ENCODE measurements at regions of chr2 and their contacts with region 1.

Region 1: GRCh38 chr2:203909261-203909967 is 27.1 kb upstream of the ICOS start:
- DNase-seq: peak; percentile 67
- ATAC-seq: peak; percentile 86
- H3K4me3 ChIP-seq: peak overlapping the region; percentile 44
- H3K27ac ChIP-seq: no peak overlapping the region
- H3K4me1 ChIP-seq: peaks cover 11% of the 10 kb centered on the region; the same call in 1 of the 2 replicates
- H3K27me3 ChIP-seq: peaks cover 6% of the 10 kb centered on the region; the same call in 1 of the 2 replicates
- CTCF ChIP-seq: peak; percentile 90

Region 2: DNA sequence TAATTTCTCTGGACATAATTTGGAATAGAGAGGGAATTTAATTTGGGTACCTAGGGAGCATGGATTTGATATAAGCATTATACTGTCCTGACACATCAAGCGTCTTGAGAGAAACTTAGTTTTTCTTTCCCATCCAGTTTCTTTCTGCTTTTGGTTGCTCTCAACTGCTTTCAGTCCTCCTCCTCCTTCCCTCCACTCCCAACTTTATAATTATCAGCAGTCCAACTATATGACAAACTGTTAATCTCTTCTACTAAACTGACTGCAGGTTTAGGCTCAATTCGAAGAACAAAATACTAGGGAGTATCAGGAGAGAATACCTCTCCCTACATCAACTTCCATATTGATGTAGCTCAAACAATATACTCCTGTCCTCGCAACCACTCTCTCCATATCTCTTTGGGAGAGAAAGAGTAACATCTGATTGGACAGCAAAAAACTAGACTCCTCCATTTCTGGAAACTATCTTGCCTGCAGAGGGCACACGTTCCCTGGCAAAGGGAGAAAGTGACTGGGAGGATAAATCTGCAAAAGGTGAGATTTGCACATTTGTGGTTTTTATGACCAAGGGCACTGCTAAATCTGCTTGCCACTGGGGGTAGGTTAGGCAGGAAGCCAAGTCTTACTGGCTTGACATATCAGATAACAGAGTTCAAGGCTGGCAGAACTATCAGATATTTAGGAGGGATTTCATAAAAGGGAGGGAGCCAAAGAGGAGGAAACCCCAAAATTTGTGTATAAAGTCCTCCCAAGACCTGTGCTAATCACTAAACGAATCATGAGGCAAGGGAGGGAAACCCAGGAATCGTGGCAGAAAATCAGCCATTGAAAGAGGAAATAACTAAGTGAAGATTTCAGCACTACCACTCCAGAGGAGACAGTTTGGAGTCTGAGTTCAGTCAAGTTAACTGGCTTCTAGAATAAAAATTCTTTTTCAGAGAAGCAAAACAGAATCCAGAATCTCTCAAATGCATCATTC is 1077.9 kb before region 1 on chr2:
- CTCF ChIA-PET with region 1: interaction called, 4 read pairs
- POLR2A ChIA-PET with region 1: no interaction called
- intact Hi-C with region 1: loop called (anchors 5 kb)
- DNase-seq: peak; percentile 86
- ATAC-seq: peak; percentile 97
- H3K4me3 ChIP-seq: peak overlapping the region; percentile 38
- H3K27ac ChIP-seq: no peak overlapping the region
- H3K4me1 ChIP-seq: peaks cover 6% of the 10 kb centered on the region
- H3K27me3 ChIP-seq: no peaks in the 10 kb centered on the region
- CTCF ChIP-seq: peak; percentile 95

Region 3: GRCh38 chr2:203484266-203485112 is 424.9 kb before region 1 on chr2:
- CTCF ChIA-PET with region 1: no interaction called
- POLR2A ChIA-PET with region 1: no interaction called
- intact Hi-C with region 1: loop called (anchors 1 kb)
- DNase-seq: peak; percentile 72
- ATAC-seq: peak; percentile 98
- H3K4me3 ChIP-seq: no peak overlapping the region
- H3K27ac ChIP-seq: no peak overlapping the region
- H3K4me1 ChIP-seq: no peaks in the 10 kb centered on the region; the same call in 1 of the 2 replicates
- H3K27me3 ChIP-seq: no peaks in the 10 kb centered on the region
- CTCF ChIP-seq: peak; percentile 90

Region 4: DNA sequence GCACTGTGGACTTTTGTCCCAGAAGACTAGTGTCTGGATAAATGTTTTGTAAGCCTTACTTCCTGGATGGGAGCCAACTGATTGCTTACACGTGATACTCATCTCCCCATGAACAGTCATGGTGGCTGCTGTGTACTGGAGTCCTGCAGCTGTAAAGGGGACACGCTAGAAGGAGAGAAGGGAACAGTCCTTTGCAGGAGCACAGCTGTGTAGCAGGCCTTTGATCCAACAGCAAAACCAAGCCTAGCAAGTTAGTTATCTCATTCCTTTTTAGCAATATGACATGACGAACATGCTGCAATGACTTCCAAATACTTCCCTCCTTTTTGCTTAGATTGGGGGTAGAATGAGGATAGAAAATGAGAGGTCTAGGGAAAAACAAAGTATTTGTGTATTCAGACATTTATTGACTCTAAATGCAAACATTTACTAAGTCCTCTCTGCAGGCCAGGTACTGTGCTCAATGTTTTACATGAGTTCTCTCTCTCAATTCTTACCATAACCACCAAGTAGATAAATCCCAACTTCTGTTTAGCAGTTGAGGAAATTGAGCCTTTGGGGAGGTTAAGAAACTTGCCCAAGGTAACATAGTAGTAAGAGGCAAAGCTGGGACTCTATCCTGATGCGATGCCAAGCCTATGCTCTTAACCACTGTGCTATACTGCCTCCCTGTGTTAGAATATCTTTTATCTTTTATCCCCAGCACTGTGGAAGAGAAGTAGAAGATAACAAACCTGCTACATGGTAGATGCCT is 258.4 kb before region 1 on chr2:
- CTCF ChIA-PET with region 1: no interaction called
- POLR2A ChIA-PET with region 1: no interaction called
- intact Hi-C with region 1: loop called (anchors 1 kb)
- DNase-seq: peak; percentile 80
- ATAC-seq: peak; percentile 76
- H3K4me3 ChIP-seq: no peak overlapping the region
- H3K27ac ChIP-seq: no peak overlapping the region
- H3K4me1 ChIP-seq: peaks cover 32% of the 10 kb centered on the region
- H3K27me3 ChIP-seq: no peaks in the 10 kb centered on the region
- CTCF ChIP-seq: peak; percentile 78

Region 5: GRCh38 chr2:203759690-203760365 is 149.6 kb before region 1 on chr2:
- CTCF ChIA-PET with region 1: no interaction called
- POLR2A ChIA-PET with region 1: no interaction called
- intact Hi-C with region 1: loop called (anchors 10 kb)
- DNase-seq: peak; percentile 97
- ATAC-seq: peak; percentile 98
- H3K4me3 ChIP-seq: peak overlapping the region; percentile 22; the same call in 1 of the 2 replicates
- H3K27ac ChIP-seq: peak overlapping the region; percentile 96
- H3K4me1 ChIP-seq: peaks cover 26% of the 10 kb centered on the region
- H3K27me3 ChIP-seq: no peaks in the 10 kb centered on the region
- CTCF ChIP-seq: no peak

Region 6: GRCh38 chr2:203858176-203858575 is 51.2 kb before region 1 on chr2:
- CTCF ChIA-PET with region 1: no interaction called
- POLR2A ChIA-PET with region 1: no interaction called
- intact Hi-C with region 1: loop called (anchors 5 kb)
- DNase-seq: no peak
- ATAC-seq: no peak
- H3K4me3 ChIP-seq: no peak overlapping the region
- H3K27ac ChIP-seq: no peak overlapping the region
- H3K4me1 ChIP-seq: no peaks in the 10 kb centered on the region
- H3K27me3 ChIP-seq: peaks cover 68% of the 10 kb centered on the region
- CTCF ChIP-seq: peak; percentile 31; the same call in 1 of the 2 replicates

Region 7: GRCh38 chr2:203873921-203874631 is 35.3 kb before region 1 on chr2:
- CTCF ChIA-PET with region 1: no interaction called
- POLR2A ChIA-PET with region 1: no interaction called
- intact Hi-C with region 1: loop called (anchors 1 kb)
- DNase-seq: peak; percentile 76
- ATAC-seq: peak; percentile 77
- H3K4me3 ChIP-seq: no peak overlapping the region
- H3K27ac ChIP-seq: no peak overlapping the region
- H3K4me1 ChIP-seq: peaks cover 9% of the 10 kb centered on the region
- H3K27me3 ChIP-seq: peaks cover 15% of the 10 kb centered on the region
- CTCF ChIP-seq: no peak

Region 8: GRCh38 chr2:203887677-203888076 is 21.7 kb before region 1 on chr2:
- CTCF ChIA-PET with region 1: no interaction called
- POLR2A ChIA-PET with region 1: no interaction called
- intact Hi-C with region 1: no loop called
- DNase-seq: no peak
- ATAC-seq: no peak
- H3K4me3 ChIP-seq: no peak overlapping the region
- H3K27ac ChIP-seq: no peak overlapping the region
- H3K4me1 ChIP-seq: no peaks in the 10 kb centered on the region
- H3K27me3 ChIP-seq: no peaks in the 10 kb centered on the region; the same call in 1 of the 2 replicates
- CTCF ChIP-seq: no peak

Measured in PC-3 (cell line).